Uterus (tissue), 4 donors: ENCODE measurements at regions of chr7 and their contacts with region 1.

Region 1: DNA sequence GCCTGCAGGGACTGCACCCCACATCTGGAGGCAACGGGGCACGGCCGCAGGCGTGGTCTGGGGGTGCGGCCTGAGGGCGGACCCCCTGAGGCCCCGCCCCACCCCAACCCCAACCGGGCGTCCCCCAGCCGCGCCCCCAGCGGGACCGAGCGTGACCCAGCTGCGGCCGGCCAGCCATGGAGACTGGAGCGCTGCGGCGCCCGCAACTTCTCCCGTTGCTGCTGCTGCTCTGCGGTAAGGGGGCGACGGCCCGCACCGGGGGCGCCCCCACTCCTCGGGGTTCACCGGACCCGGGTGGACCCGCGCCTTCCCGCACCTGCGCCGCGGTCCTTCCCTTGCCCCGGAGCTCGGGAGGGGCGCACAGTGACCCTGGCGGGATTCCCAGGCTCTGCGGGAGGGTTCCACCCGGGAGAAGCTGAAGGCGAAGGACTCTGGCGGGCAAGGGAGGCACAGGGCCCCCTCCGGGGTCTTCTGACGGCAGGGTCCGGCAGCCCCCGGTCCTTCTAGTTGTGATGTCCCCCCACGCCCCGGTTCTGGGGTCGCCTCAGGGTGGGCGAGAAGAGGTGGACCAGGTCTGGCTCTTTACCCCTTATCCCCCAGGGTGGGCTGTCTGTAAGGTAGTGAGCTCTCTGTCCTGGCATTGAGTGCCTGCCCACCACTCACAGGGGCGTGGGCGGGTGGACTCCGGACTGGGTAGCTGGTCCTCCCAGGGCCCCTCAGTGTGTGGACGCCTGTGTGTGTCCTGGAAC is at the start of gene RAMP3:
- DNase-seq: no peak
- H3K4me3 ChIP-seq: peak within 1 kb of the TSS; percentile 18 to 22
- H3K27ac ChIP-seq: peak within 1 kb of the TSS; percentile 42 to 47
- H3K4me1 ChIP-seq: peaks cover 0 to 4% of the 10 kb centered on the region in 2 donors
- H3K27me3 ChIP-seq: peaks cover 0 to 3% of the 10 kb centered on the region in 2 donors
- CTCF ChIP-seq: no peak
- POLR2A ChIP-seq: no peak
- total RNA-seq, gene RAMP3: 11.9 to 182 (median 57.5) TPM

Region 2: GRCh38 chr7:44955733-44956132 is 202.1 kb before region 1 on chr7:
- intact Hi-C with region 1: no loop called
- DNase-seq: no peak
- H3K4me3 ChIP-seq: no peak overlapping the region
- H3K27ac ChIP-seq: no peak overlapping the region
- H3K4me1 ChIP-seq: no peaks in the 10 kb centered on the region
- H3K27me3 ChIP-seq: no peaks in the 10 kb centered on the region
- CTCF ChIP-seq: no peak
- POLR2A ChIP-seq: no peak

Region 3: DNA sequence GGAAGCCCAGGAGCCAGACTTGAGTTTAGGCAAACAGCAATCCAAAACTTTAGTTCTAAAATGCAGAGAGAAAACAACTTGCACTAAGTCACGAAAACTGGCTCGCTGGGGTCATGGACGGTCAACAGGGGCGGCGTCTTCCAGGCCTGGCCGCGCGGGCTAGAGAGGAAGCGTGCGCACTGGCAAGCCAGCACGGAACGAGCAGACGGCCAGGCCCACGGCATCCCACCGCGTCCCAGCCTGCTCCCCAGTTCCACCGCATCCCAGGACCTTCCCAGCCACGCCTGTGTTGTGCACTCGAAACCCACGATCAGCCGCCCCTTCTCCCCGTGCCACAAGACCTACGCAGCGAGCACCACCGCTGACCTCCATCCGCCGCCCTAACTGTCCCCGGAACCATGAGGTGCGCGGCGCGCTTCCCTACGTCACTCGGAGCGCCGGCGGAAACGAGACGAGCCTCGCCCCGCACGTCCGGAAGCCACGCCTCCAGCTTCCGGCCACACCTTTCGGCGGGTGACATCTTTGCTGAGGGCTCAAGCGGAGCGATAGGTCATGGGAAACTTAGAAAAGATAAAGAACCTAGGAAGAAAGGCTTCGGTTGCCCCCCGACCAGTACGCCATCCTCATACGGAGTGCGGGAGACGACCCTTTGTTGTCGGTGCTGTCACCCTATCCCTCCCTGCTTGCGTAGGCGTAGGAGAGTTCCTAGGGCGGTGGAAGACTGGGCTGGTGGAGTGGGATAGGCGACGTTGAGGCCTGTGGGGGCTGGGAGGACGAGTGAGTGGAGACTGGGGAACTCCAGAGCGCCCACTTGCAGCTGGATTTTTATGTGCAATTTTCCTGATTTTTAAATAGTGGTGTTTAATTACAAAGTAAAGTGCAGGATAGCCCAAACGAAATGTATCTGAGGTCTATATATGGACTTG is 46.3 kb before region 1 on chr7 and contains the start of gene TBRG4:
- intact Hi-C with region 1: no loop called
- DNase-seq: peak; percentile 92 to 94
- H3K4me3 ChIP-seq: peak within 1 kb of the TSS; percentile 50 to 89
- H3K27ac ChIP-seq: peak within 1 kb of the TSS; percentile 92
- H3K4me1 ChIP-seq: peaks cover 0 to 3% of the 10 kb centered on the region in 2 donors
- H3K27me3 ChIP-seq: no peaks in the 10 kb centered on the region
- CTCF ChIP-seq: peak in 3 of 4 experiments; percentile 10 to 55 (median 29)
- POLR2A ChIP-seq: peak; percentile 70 to 93
- total RNA-seq, gene TBRG4: 7.4 to 51.2 (median 42.5) TPM

Region 4: DNA sequence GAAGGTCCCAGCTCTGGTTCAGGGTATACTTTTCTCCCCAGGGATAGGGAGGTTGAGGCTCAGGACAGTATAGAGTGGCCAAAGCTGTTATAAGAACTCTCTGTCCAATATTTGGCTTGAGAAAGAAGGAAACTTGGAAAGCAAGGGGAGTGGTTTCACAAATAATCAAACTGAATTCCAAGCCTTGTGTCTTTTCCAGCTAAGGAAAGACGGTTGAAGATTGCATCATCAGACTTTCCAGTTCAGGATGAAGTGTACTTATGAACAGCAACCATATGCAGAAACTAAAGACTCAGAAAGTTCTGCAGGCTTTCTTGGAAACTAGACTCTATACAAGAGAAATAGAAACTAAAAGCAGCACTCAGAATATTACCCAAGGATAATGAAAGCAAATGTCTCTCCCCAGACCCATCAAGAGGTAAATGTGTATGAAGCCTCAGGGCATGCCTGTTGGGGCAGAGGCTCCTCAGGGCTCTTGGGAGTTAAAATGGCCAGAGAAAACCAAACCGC is 46.2 kb after region 1 on chr7:
- intact Hi-C with region 1: no loop called
- DNase-seq: no peak
- H3K4me3 ChIP-seq: no peak overlapping the region
- H3K27ac ChIP-seq: peak overlapping the region; percentile 13 to 67
- H3K4me1 ChIP-seq: no peaks in the 10 kb centered on the region
- H3K27me3 ChIP-seq: no peaks in the 10 kb centered on the region
- CTCF ChIP-seq: no peak
- POLR2A ChIP-seq: no peak

Region 5: DNA sequence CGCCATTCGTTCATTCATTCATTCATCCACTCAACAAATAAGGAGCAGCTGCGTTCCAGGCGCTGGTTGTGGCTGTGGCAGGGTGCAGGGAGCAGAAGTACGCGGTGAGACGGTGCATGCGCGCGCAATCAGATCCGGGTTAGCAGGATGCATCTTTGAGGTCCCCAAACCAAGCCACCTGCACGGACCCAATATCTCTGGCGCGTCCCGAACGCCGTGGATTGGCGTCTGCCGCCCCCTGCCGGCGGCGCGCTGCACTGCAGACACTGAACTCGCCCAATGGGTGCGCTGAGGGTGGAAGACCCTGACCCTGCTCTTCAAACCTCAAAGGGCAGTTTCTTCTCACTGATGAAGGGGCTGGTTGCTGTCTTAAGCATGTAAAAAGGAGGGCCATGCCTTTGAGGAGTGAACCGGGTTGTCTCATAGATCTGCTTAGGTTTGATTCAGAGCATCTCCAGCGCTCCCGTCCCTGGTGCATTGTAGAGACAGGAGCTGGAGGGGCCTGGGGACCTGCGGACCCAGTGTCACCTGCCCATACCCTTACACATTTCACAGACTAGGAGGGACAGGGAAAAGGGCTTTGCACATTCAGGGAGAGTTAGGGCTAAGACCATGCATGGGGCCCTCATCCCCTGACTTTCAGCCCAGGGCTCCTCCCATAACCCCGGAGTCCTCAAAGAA is 102.3 kb after region 1 on chr7:
- intact Hi-C with region 1: loop called (anchors 10 kb)
- DNase-seq: peak in 1 of 2 donors; percentile 43
- H3K4me3 ChIP-seq: no peak overlapping the region
- H3K27ac ChIP-seq: no peak overlapping the region
- H3K4me1 ChIP-seq: no peaks in the 10 kb centered on the region
- H3K27me3 ChIP-seq: no peaks in the 10 kb centered on the region
- CTCF ChIP-seq: peak; percentile 78 to 91 (median 82)
- POLR2A ChIP-seq: no peak